ENCODE measurements at regions of chr14 and their contacts with region 1.

Region 1: GRCh38 chr14:100246826-100247428 is 8.0 kb downstream of the YY1 start:
- DNase-seq: peak in 3 of 14 experiments; percentile 65 to 72 (median 69)
- ATAC-seq: peak; percentile 65
- H3K4me3 ChIP-seq: no peak overlapping the region
- H3K4me3 Mint-ChIP-seq: peak overlapping the region; percentile 6
- H3K27ac ChIP-seq: no peak overlapping the region
- H3K27ac Mint-ChIP-seq: peak overlapping the region; percentile 55
- H3K4me1 ChIP-seq: peaks cover 83% of the 10 kb centered on the region
- H3K4me1 Mint-ChIP-seq: peaks cover 75% of the 10 kb centered on the region
- H3K27me3 ChIP-seq: no peaks in the 10 kb centered on the region
- H3K27me3 Mint-ChIP-seq: no peaks in the 10 kb centered on the region
- CTCF ChIP-seq: peak; percentile 67

Region 2: GRCh38 chr14:100213956-100214774 is 32.8 kb before region 1 on chr14:
- CTCF ChIA-PET with region 1: interaction called, 3 read pairs
- POLR2A ChIA-PET with region 1: interaction called, 3 read pairs
- intact Hi-C with region 1: loop called in 1 of 2 experiments (anchors 5 kb)
- DNase-seq: peak; percentile 83 to 98 (median 92)
- ATAC-seq: peak; percentile 96
- H3K4me3 ChIP-seq: peak overlapping the region; percentile 66
- H3K4me3 Mint-ChIP-seq: peak overlapping the region; percentile 89
- H3K27ac ChIP-seq: peak overlapping the region; percentile 79 to 89
- H3K27ac Mint-ChIP-seq: peak overlapping the region; percentile 91
- H3K4me1 ChIP-seq: peaks cover 32% of the 10 kb centered on the region
- H3K4me1 Mint-ChIP-seq: peaks cover 32% of the 10 kb centered on the region
- H3K27me3 ChIP-seq: no peaks in the 10 kb centered on the region
- H3K27me3 Mint-ChIP-seq: no peaks in the 10 kb centered on the region
- CTCF ChIP-seq: no peak

Region 3: DNA sequence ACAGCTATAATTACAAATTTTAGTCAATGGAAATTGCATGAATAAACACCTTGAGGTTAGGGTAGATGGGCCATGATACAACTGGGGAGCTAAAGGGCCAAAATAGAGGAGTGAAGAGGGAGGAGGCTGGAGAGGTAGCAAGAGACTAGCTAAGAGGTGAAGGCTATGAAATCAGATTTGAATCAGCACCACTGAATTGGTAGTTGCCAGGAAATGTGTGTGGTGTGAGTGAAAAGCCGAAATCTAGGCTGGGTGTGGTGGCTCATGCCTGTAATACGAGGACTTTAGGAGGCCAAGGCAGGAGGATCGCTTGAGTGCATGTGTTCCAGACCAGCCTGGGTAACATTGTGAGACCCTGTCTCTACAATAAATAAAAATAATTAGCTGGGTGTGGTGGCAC is 14.7 kb after region 1 on chr14:
- CTCF ChIA-PET with region 1: interaction called, 3 read pairs
- POLR2A ChIA-PET with region 1: interaction called, 7 read pairs
- intact Hi-C with region 1: loop called in 1 of 2 experiments (anchors 2 kb)
- DNase-seq: no peak
- ATAC-seq: peak; percentile 56
- H3K4me3 ChIP-seq: no peak overlapping the region
- H3K4me3 Mint-ChIP-seq: peak overlapping the region; percentile 9
- H3K27ac ChIP-seq: no peak overlapping the region
- H3K27ac Mint-ChIP-seq: peak overlapping the region; percentile 52
- H3K4me1 ChIP-seq: peaks cover 76% of the 10 kb centered on the region
- H3K4me1 Mint-ChIP-seq: peaks cover 90% of the 10 kb centered on the region
- H3K27me3 ChIP-seq: no peaks in the 10 kb centered on the region
- H3K27me3 Mint-ChIP-seq: no peaks in the 10 kb centered on the region
- CTCF ChIP-seq: no peak